Upper lobe of right lung (tissue), 1 donor: ENCODE measurements at regions of chr20 and their contacts with region 1.

Region 1: DNA sequence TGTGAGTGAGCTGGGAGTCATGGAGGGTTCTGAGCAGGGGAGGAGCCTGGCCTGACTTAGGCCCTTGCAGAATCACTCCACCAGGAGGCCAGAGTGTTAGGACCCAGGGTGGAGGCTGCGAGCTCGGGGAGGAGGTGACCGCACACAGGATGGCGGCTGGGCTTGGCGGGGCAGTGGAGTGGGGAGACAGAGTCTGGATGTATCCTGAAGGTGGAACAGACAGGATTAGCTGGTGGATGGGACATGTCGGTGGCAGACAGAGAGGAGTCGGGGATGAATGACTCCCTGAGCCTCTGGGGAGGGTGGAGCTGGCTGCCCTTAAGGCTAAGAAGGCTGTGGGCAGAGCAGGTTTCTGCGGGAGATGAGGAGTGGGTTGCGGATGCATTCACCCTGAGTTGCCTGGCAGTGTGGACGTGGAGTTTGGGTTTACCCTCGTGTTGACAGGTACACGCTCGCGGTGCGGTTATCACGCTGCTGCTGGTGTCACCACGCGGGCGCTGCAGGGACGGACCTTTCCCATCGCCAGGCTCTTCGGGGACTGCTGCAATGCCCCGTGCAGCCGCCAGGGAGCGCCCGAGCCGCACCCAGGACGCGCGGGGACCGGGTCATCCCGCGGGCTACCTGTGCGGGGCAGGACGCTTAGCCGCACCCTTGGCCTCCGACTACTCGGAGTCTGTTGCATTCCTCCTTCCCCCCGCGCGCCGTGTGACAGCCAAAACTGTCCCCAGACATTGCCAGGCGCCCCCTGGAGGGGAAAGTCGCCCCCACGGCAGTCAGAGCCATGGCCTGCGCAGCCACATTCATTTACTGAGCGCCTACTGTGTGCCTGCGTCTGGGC is 43.0 kb upstream of the PTGIS start:
- DNase-seq: peak; percentile 90
- ATAC-seq: peak; percentile 95
- H3K4me3 ChIP-seq: peak overlapping the region; percentile 23
- H3K27ac ChIP-seq: no peak overlapping the region
- H3K4me1 ChIP-seq: peaks cover 13% of the 10 kb centered on the region
- H3K27me3 ChIP-seq: no peaks in the 10 kb centered on the region
- CTCF ChIP-seq: peak; percentile 100

Region 2: DNA sequence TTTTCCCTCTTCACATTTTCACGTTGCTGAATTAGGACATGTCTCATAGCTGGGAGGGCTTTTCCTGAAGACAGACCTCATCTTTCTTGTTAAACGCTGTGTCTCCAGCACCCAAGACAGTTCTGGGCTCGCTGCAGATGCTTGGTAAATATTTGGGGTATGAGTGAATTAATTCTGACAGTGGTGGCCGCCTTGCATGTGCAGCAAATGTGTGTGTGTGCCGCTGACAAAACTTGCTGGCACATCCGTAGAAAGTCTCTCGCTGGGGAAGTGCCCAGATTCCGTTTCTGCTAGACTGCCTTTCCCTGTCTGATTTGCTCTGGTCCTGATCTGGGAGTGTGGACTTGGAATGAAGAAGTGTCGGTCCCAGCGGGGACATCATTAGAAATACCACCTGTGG is 284.9 kb before region 1 on chr20:
- intact Hi-C with region 1: loop called (anchors 5 kb)
- DNase-seq: no peak
- ATAC-seq: no peak
- H3K4me3 ChIP-seq: no peak overlapping the region
- H3K27ac ChIP-seq: no peak overlapping the region
- H3K4me1 ChIP-seq: no peaks in the 10 kb centered on the region
- H3K27me3 ChIP-seq: peaks cover 11% of the 10 kb centered on the region
- CTCF ChIP-seq: no peak

Region 3: DNA sequence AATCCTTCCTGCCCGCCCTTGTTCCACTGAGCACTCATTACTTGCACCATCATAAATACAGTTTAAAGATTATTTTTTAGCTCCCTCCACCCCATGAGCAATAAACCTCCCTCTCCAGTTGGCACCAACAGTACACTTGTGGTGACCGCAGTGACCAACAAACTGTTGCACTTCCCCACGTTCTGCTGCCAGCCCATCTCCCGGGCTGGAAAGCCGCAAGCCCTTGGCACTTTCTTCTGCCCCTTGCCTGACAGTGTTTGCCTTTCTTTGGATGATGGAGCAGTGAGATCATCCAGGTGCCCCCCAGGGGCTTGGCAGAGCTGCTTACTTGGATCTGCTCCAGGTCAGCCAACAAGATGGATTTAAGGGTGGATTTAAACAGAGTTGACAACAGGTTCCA is 150.0 kb before region 1 on chr20:
- intact Hi-C with region 1: no loop called
- DNase-seq: no peak
- ATAC-seq: no peak
- H3K4me3 ChIP-seq: no peak overlapping the region
- H3K27ac ChIP-seq: no peak overlapping the region
- H3K4me1 ChIP-seq: no peaks in the 10 kb centered on the region
- H3K27me3 ChIP-seq: no peaks in the 10 kb centered on the region
- CTCF ChIP-seq: no peak

Region 4: DNA sequence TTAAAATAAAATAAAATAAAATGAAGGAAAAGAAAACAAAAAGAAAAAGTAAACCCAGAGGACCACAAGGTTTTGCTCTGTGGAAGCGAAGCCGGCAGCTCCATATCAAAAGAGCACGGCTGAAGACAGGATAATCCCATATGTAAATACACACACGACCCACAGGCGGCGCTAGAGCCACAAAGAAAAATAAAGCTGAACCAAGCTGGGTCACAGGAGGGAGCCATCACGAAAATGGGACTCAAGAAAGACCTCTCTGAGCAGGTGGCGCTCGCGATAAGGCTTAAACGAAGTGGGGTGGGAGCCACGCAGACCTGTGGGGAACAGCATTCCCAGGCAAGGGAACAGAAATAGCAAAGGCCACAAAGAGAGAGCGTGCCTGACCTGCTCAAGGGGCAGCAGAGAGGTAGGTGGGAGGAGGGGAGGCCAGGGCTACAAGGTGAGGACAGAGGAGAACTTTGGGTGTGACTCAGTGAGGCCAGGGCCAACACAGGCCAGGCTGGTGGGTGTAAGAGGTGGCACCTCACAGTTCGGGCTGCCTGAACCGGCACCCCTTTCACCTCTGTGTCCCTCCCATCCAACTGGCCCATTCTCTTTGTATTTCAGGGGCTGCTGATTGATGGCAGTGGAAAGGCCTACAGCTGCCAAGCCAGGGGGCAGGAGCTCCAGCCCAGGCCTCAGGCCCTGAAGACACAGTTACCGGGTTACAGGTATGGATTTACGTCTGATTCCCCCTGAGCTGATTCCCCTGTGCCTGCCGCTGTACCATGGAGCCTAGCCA is 69.0 kb before region 1 on chr20:
- intact Hi-C with region 1: loop called (anchors 5 kb)
- DNase-seq: peak; percentile 75
- ATAC-seq: peak; percentile 80
- H3K4me3 ChIP-seq: no peak overlapping the region
- H3K27ac ChIP-seq: no peak overlapping the region
- H3K4me1 ChIP-seq: no peaks in the 10 kb centered on the region
- H3K27me3 ChIP-seq: no peaks in the 10 kb centered on the region
- CTCF ChIP-seq: peak; percentile 77

Region 5: GRCh38 chr20:49846206-49846807 is 235.4 kb after region 1 on chr20:
- intact Hi-C with region 1: loop called (anchors 5 kb)
- DNase-seq: no peak
- ATAC-seq: peak; percentile 88
- H3K4me3 ChIP-seq: no peak overlapping the region
- H3K27ac ChIP-seq: no peak overlapping the region
- H3K4me1 ChIP-seq: peaks cover 11% of the 10 kb centered on the region
- H3K27me3 ChIP-seq: no peaks in the 10 kb centered on the region
- CTCF ChIP-seq: peak; percentile 66